ENCODE measurements at regions of chr4 and their contacts with region 1.

Region 1: GRCh38 chr4:159206427-159206871 is 103.6 kb downstream of the RAPGEF2 start:
- DNase-seq: no peak
- H3K4me3 Mint-ChIP-seq: no peak overlapping the region
- H3K27ac Mint-ChIP-seq: no peak overlapping the region
- H3K4me1 Mint-ChIP-seq: peaks cover 18% of the 10 kb centered on the region
- H3K27me3 Mint-ChIP-seq: no peaks in the 10 kb centered on the region
- CTCF ChIP-seq: no peak

Region 2: GRCh38 chr4:158042591-158043030 is 1163.8 kb before region 1 on chr4:
- CTCF ChIA-PET with region 1: no interaction called
- POLR2A ChIA-PET with region 1: no interaction called
- intact Hi-C with region 1: no loop called
- DNase-seq: peak; percentile 9
- H3K4me3 Mint-ChIP-seq: peak overlapping the region; percentile 10
- H3K27ac Mint-ChIP-seq: no peak overlapping the region
- H3K4me1 Mint-ChIP-seq: peaks cover 25% of the 10 kb centered on the region
- H3K27me3 Mint-ChIP-seq: no peaks in the 10 kb centered on the region
- CTCF ChIP-seq: no peak

Region 3: GRCh38 chr4:158729716-158730559 is 476.5 kb before region 1 on chr4:
- CTCF ChIA-PET with region 1: interaction called, 5 read pairs
- POLR2A ChIA-PET with region 1: no interaction called
- intact Hi-C with region 1: loop called (anchors 1 kb)
- DNase-seq: peak; percentile 69
- H3K4me3 Mint-ChIP-seq: no peak overlapping the region
- H3K27ac Mint-ChIP-seq: no peak overlapping the region
- H3K4me1 Mint-ChIP-seq: no peaks in the 10 kb centered on the region
- H3K27me3 Mint-ChIP-seq: peaks cover 55% of the 10 kb centered on the region
- CTCF ChIP-seq: peak; percentile 75

Region 4: GRCh38 chr4:159216834-159217233 is 10.4 kb after region 1 on chr4:
- CTCF ChIA-PET with region 1: interaction called, 13 read pairs
- POLR2A ChIA-PET with region 1: interaction called, 5 read pairs
- intact Hi-C with region 1: no loop called
- DNase-seq: no peak
- H3K4me3 Mint-ChIP-seq: no peak overlapping the region
- H3K27ac Mint-ChIP-seq: no peak overlapping the region
- H3K4me1 Mint-ChIP-seq: no peaks in the 10 kb centered on the region
- H3K27me3 Mint-ChIP-seq: no peaks in the 10 kb centered on the region
- CTCF ChIP-seq: no peak

Region 5: GRCh38 chr4:159312236-159312635 is 105.8 kb after region 1 on chr4:
- CTCF ChIA-PET with region 1: interaction called, 3 read pairs
- POLR2A ChIA-PET with region 1: no interaction called
- intact Hi-C with region 1: loop called (anchors 1 kb)
- DNase-seq: no peak
- H3K4me3 Mint-ChIP-seq: no peak overlapping the region
- H3K27ac Mint-ChIP-seq: no peak overlapping the region
- H3K4me1 Mint-ChIP-seq: peaks cover 8% of the 10 kb centered on the region
- H3K27me3 Mint-ChIP-seq: no peaks in the 10 kb centered on the region
- CTCF ChIP-seq: no peak

Region 6: GRCh38 chr4:159446266-159446976 is 240.0 kb after region 1 on chr4:
- CTCF ChIA-PET with region 1: interaction called, 7 read pairs
- POLR2A ChIA-PET with region 1: no interaction called
- intact Hi-C with region 1: loop called (anchors 1 kb)
- DNase-seq: peak; percentile 75
- H3K4me3 Mint-ChIP-seq: no peak overlapping the region
- H3K27ac Mint-ChIP-seq: peak overlapping the region; percentile 23
- H3K4me1 Mint-ChIP-seq: peaks cover 7% of the 10 kb centered on the region
- H3K27me3 Mint-ChIP-seq: no peaks in the 10 kb centered on the region
- CTCF ChIP-seq: peak; percentile 88

Measured in MCF 10A (cell line).